Posterior cingulate gyrus (tissue), 11 donors: ENCODE measurements at regions of chr11 and their contacts with region 1.

Region 1: GRCh38 chr11:95835768-95836488 is 45.6 kb downstream of the CEP57 start:
- DNase-seq: peak in 7 of 10 donors; percentile 41 to 89 (median 55)

Region 2: DNA sequence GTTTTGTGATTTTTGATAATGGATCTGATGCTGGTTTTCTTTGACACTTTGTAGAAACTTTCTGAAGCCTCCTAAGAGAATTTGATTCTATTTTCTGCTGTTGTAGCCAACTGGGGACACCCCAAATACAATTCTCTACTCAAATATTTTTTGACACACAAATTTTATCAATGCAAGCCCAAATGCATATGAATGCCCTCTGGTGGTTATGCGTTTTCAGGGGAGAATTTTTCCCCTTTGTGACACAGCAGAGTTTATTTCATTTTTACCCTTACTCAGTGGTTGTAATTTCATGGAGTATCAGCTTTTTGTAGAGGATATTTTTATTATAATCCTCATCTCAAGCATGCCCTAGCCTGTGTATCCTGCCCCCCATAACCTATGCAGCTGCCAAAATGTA is 132.7 kb after region 1 on chr11:
- intact Hi-C with region 1: loop called (anchors 1 kb)
- DNase-seq: peak in 1 of 10 donors; percentile 10

Region 3: DNA sequence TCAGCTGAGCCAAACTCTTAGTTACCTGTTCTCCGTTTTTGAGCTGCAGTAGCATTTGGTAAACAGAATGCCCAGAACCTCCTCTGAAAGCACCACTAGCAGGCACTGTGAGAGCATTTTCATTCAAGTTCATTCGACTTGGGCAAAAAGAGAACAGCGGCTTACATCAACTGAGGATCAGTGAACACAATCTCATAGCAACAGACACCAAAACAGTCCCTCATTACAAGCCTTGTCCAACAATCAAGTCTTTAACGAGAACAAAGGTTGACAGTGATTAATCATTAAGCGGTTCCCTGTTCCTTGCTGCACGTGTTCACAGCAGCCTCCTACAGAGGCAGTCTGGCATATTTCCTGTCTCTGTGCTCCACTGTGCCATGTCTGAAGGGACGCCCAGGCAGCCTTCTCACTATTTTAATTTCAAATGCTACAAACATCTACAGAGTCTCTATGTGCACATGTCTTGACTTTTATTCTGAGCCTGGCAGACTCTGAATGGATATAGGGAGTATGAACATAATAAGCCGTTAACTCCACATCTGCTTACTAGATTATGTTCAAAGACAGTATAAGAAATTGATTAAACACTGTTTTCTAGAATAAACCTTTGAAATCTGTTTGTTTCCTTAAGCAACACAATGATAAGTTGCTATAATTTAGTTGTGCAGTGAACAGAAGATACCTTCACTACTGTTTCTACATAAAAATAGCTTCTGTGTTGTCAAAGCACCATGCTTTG is 176.3 kb after region 1 on chr11:
- intact Hi-C with region 1: no loop called
- DNase-seq: peak in 9 of 10 donors; percentile 25 to 89 (median 51)

Region 4: DNA sequence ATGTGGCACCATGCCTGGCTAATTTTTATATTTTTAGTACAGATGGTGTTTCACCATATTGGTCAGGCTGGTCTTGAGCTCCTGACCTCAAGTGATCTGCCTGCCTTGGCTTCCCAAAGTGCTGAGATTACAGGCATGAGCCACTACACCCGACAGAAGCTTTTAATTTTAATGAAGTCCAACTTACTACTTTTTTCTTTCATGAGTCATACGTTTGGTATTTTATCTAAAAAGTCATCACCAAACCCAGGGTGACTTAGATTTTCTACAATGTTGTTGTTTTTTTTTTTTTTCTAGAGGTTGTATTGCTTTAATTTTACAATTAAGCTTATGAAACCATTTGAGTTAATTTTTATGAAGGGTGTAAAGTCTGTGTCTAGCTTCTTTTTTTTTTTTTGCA is 588.8 kb after region 1 on chr11:
- intact Hi-C with region 1: loop called (anchors 5 kb)
- DNase-seq: no peak